ENCODE measurements at regions of chr11 and their contacts with region 1.

Region 1: DNA sequence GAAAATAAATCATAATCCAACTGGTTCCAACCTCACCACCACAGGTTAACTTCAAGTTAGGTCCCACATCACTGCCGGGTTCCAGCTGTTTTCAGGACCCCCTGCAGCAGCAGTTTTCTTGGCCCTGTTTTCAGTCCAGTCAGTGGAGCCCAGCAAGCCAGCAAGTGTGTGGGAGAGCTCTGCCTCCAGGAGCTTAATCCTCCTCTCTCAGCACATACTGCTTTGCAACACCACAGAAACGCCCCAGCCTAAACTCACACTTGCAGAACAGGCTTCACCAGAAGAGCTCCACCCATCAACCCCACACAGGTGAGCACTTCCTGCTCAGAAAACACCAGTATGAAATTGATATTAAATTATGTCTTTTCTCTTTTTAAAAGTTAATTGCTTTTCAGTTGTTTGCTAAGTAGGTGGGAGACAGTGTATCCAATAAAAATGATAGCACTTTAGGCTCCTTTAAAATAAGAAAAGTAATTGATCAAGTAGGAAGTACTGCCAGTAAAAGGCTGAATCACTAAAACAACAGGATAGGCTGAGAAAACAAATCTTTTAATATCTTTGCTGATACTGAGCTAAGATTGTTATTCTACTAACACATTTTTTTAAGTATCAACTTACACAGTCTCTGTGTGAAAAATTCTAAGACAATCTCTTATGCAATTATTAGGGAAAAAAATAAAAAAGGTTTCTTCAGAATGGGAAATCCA is 81.5 kb upstream of the TP53AIP1 start:
- DNase-seq: peak; percentile 96
- ATAC-seq: peak; percentile 96
- H3K4me3 ChIP-seq: peak overlapping the region; percentile 61
- H3K27ac ChIP-seq: peak overlapping the region; percentile 82
- H3K4me1 ChIP-seq: peaks cover 48% of the 10 kb centered on the region
- H3K27me3 ChIP-seq: no peaks in the 10 kb centered on the region
- CTCF ChIP-seq: no peak

Region 2: DNA sequence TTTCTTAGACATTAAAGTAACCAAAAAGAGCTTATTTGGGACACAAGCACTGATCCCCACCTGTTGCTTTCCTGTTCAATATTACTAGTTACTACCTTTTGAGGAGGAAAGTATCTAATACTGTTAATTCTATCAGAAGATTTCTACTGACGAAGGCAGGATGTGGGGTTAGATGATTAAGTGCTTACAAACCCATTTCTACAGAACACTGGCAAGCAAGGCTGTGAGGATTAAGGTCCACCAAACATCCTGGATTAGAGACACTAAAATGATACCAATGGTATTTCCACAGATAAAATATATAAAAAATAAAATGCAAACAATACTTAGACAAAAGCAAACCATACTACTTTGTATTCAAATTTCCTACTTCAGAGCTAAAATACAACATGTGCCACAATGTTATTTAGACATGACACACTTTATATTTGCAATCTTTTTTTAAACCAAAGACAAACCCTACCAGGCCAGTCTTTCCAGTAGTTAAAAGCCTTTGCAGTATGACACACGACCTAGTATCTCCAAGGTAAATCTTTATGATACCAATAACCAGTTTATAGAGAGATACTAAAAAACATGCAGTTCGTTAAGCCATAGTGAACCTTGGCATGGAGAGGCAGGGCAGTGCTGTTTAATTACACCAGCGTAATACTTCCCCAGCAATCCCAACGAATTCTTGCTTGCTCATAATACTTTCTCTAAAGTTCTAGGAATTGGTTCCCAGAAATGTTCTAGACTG is 10.2 kb before region 1 on chr11:
- CTCF ChIA-PET with region 1: no interaction called
- POLR2A ChIA-PET with region 1: no interaction called
- intact Hi-C with region 1: loop called (anchors 1 kb)
- DNase-seq: peak; percentile 95
- ATAC-seq: peak; percentile 79
- H3K4me3 ChIP-seq: peak overlapping the region; percentile 42
- H3K27ac ChIP-seq: peak overlapping the region; percentile 90
- H3K4me1 ChIP-seq: peaks cover 62% of the 10 kb centered on the region
- H3K27me3 ChIP-seq: no peaks in the 10 kb centered on the region
- CTCF ChIP-seq: no peak

Region 3: DNA sequence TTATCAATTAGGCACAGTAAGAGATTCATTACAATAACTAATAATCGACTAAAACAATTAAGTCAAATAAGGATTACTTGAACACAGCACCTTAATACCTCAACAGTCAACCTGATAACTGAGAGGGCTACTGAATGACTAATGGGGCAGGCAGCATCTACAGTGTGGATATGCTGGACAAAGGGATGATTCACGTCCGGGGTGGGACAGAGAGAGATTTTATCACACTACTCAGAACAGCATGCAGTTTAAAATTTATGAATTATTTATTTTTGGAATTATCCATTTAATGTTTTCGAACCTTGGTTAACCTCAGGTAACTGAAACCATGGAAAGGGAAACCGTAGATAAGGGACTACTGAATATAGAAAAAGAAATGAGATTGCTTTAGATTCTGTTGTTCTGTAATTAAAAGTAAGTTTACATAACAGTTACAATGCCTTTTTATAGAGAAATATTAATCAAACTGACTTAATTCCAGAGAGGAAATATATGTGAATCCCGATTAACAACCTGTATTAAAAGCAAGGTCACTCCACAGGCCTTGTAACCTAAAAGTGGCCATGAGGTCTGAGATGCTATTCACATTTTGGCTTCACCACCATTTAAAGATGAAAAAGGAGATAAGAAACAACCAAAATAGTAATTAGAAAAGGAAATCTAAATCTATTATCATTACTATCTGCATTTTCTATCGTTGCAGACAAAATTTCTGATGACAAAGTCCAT is 37.5 kb after region 1 on chr11:
- CTCF ChIA-PET with region 1: no interaction called
- POLR2A ChIA-PET with region 1: no interaction called
- intact Hi-C with region 1: loop called (anchors 2 kb)
- DNase-seq: peak; percentile 95
- ATAC-seq: peak; percentile 100
- H3K4me3 ChIP-seq: peak overlapping the region; percentile 46
- H3K27ac ChIP-seq: peak overlapping the region; percentile 92
- H3K4me1 ChIP-seq: peaks cover 17% of the 10 kb centered on the region
- H3K27me3 ChIP-seq: no peaks in the 10 kb centered on the region
- CTCF ChIP-seq: no peak

Region 4: DNA sequence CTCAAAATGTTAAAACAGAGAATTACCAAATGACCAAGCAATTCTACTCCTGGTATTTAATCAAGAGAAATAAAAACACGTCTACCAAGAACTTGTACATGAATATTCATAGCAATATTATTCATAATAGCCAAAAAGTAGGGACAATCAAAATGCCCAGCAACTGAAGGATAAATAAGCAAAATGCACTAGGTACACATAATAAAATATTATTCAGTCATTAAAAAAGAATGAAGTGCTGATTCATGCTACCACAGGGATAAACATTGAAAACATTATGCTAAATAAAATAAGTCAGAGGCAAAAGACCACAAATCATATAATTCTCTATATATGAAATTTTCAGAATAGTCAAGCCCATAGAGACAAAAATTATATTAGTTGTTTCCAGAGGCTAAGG is 143.2 kb after region 1 on chr11:
- CTCF ChIA-PET with region 1: no interaction called
- POLR2A ChIA-PET with region 1: no interaction called
- intact Hi-C with region 1: no loop called
- DNase-seq: peak; percentile 65
- ATAC-seq: peak; percentile 90
- H3K4me3 ChIP-seq: no peak overlapping the region
- H3K27ac ChIP-seq: peak overlapping the region; percentile 38
- H3K4me1 ChIP-seq: peaks cover 18% of the 10 kb centered on the region
- H3K27me3 ChIP-seq: no peaks in the 10 kb centered on the region
- CTCF ChIP-seq: no peak

Measured in PC-3 (cell line).